Gastrocnemius medialis (tissue), 4 donors: ENCODE measurements at regions of chr4 and their contacts with region 1.

Region 1: GRCh38 chr4:82739316-82740179 is 59.0 kb downstream of the SCD5 start:
- DNase-seq: peak in 1 of 2 donors; percentile 50
- ATAC-seq: peak; percentile 45 to 66
- H3K4me3 ChIP-seq: no peak overlapping the region
- H3K27ac ChIP-seq: no peak overlapping the region
- H3K4me1 ChIP-seq: no peaks in the 10 kb centered on the region
- H3K27me3 ChIP-seq: no peaks in the 10 kb centered on the region
- CTCF ChIP-seq: peak; percentile 77 to 82 (median 79)
- POLR2A ChIP-seq: no peak

Region 2: GRCh38 chr4:82462415-82462831 is 277.1 kb before region 1 on chr4:
- in situ Hi-C with region 1: loop called (anchors 5 to 10 kb)
- intact Hi-C with region 1: loop called (anchors 1 kb)
- DNase-seq: peak; percentile 64 to 87
- ATAC-seq: peak; percentile 82 to 93
- H3K4me3 ChIP-seq: no peak overlapping the region
- H3K27ac ChIP-seq: no peak overlapping the region
- H3K4me1 ChIP-seq: peaks cover 0 to 5% of the 10 kb centered on the region in 2 donors
- H3K27me3 ChIP-seq: no peaks in the 10 kb centered on the region
- CTCF ChIP-seq: peak; percentile 39 to 94 (median 71)
- POLR2A ChIP-seq: no peak

Region 3: GRCh38 chr4:82484996-82485783 is 254.4 kb before region 1 on chr4:
- in situ Hi-C with region 1: no loop called
- intact Hi-C with region 1: no loop called
- DNase-seq: no peak
- ATAC-seq: no peak
- H3K4me3 ChIP-seq: no peak overlapping the region
- H3K27ac ChIP-seq: no peak overlapping the region
- H3K4me1 ChIP-seq: no peaks in the 10 kb centered on the region
- H3K27me3 ChIP-seq: no peaks in the 10 kb centered on the region
- CTCF ChIP-seq: no peak
- POLR2A ChIP-seq: no peak

Region 4: DNA sequence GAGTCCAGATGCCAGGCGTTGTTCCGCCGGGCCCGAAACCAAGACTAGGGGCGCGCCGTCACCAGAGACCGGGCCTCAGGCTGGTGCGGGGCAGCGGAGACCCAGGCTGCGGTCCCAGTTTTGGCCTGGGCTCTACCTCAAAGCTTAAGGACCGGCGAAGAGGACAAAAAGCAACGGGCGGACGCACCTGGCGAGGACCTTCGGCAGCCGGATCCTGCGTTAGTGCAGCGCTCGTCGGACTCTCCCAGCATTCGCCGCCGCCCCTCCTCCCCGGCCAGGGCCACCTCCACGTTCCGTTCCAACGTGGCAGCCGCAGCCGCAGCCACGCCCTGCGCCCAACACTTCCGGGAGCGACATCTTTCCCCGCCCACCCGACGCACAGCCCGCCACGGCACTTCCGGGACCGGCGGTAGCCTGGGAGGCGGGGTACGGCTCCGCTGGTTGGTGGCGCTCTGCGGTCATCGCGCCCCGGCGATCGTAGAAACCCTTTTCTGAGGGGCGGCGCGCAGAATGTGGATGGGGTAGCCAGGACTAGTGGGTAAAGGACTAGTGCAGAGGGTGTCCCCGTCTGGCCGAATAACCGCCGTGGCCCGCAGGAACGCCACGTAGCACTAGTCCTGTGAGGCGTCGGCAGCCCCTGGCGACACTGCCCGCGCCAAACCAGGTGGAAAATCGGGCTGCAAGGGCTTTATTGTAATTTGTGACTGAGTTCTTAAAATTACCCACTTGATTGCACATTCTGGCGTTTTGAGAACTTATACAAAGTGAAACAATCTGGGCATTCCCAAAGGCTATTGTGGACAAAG is 151.6 kb after region 1 on chr4 and contains the start of gene SEC31A:
- in situ Hi-C with region 1: no loop called
- intact Hi-C with region 1: no loop called
- DNase-seq: peak; percentile 92 to 94
- ATAC-seq: peak; percentile 93 to 95
- H3K4me3 ChIP-seq: peak within 1 kb of the TSS; percentile 85 to 96 (median 88)
- H3K27ac ChIP-seq: peak within 1 kb of the TSS; percentile 96 to 97 (median 96)
- H3K4me1 ChIP-seq: peaks cover 32 to 34% of the 10 kb centered on the region in 2 donors
- H3K27me3 ChIP-seq: no peaks in the 10 kb centered on the region
- CTCF ChIP-seq: peak in 1 of 5 experiments; percentile 22
- POLR2A ChIP-seq: peak; percentile 93
- total RNA-seq, gene SEC31A: 95.2 to 112 (median 105) TPM

Region 5: GRCh38 chr4:82947498-82947897 is 207.9 kb after region 1 on chr4:
- in situ Hi-C with region 1: no loop called
- intact Hi-C with region 1: no loop called
- DNase-seq: no peak
- ATAC-seq: no peak
- H3K4me3 ChIP-seq: no peak overlapping the region
- H3K27ac ChIP-seq: no peak overlapping the region
- H3K4me1 ChIP-seq: no peaks in the 10 kb centered on the region
- H3K27me3 ChIP-seq: no peaks in the 10 kb centered on the region
- CTCF ChIP-seq: no peak
- POLR2A ChIP-seq: no peak

Region 6: GRCh38 chr4:83369831-83370639 is 630.5 kb after region 1 on chr4:
- in situ Hi-C with region 1: no loop called
- intact Hi-C with region 1: no loop called
- DNase-seq: no peak
- ATAC-seq: no peak
- H3K4me3 ChIP-seq: no peak overlapping the region
- H3K27ac ChIP-seq: no peak overlapping the region
- H3K4me1 ChIP-seq: no peaks in the 10 kb centered on the region
- H3K27me3 ChIP-seq: no peaks in the 10 kb centered on the region
- CTCF ChIP-seq: no peak
- POLR2A ChIP-seq: no peak